Activated CD8-positive, alpha-beta T cell treated with anti-CD3 and anti-CD28 coated beads, Interleukin-2, amount 10 ng/mL, durations not matched to agents 7 days and 5 days (primary cell): ENCODE measurements at regions of chr3 and their contacts with region 1.

Region 1: GRCh38 chr3:3160826-3161225 is 18.7 kb downstream of the CRBN start:
- DNase-seq: no peak
- ATAC-seq: no peak
- H3K4me3 Mint-ChIP-seq: no peak overlapping the region
- H3K27ac Mint-ChIP-seq: no peak overlapping the region
- H3K4me1 Mint-ChIP-seq: no peaks in the 10 kb centered on the region
- H3K27me3 Mint-ChIP-seq: no peaks in the 10 kb centered on the region

Region 2: DNA sequence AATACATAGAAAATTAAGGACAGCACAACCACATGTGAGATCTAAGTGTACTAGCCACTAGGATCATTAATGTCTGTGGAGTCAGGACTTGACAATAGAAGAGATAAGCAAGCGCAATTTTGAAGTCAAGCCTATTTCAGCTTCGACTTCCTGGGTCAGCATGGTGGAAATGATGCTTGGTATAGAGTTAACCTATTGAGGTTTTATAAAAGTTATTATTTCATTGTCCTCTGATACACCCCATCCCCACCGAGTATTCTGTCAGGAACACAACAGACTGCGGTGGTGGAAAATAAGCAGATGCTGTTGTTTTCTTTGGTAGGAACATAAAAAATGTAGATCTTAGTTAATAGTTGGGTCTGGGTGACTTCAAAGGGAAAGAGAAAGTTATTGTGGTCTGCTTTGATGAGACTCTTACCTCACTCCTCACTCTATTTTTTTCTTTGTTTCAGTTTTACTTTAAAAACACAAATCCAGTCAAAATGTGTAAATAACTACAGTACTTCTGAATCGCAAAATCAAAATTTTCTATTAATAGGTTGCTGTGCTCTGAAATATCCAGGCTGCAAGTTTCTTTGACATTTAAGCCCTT is 132.8 kb before region 1 on chr3:
- CTCF ChIA-PET with region 1: no interaction called
- POLR2A ChIA-PET with region 1: no interaction called
- DNase-seq: no peak
- ATAC-seq: peak; percentile 73
- H3K4me3 Mint-ChIP-seq: peak overlapping the region; percentile 13
- H3K27ac Mint-ChIP-seq: peak overlapping the region; percentile 43
- H3K4me1 Mint-ChIP-seq: peaks cover 10% of the 10 kb centered on the region
- H3K27me3 Mint-ChIP-seq: peaks cover 6% of the 10 kb centered on the region

Region 3: DNA sequence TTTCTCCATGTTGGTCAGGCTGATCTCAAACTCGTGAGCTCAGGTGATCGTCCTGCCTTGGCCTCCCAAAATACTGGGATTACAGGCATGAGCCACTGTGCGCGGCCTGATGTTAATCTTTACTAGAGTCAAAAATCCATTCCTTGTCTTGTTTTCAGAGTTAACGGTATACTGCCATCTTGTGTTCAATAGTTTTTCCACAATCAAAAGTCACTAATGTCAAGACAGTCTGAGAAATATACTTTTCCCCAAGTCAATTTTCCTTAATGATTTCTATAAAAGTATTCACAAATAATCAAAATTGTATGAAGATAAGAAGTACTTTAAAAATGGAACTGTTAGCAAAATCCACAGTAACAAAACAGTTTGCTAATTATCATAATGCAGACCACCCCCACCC is 10.2 kb after region 1 on chr3:
- CTCF ChIA-PET with region 1: interaction called, 12 read pairs
- POLR2A ChIA-PET with region 1: interaction called, 3 read pairs
- DNase-seq: no peak
- ATAC-seq: no peak
- H3K4me3 Mint-ChIP-seq: no peak overlapping the region
- H3K27ac Mint-ChIP-seq: no peak overlapping the region
- H3K4me1 Mint-ChIP-seq: peaks cover 49% of the 10 kb centered on the region
- H3K27me3 Mint-ChIP-seq: no peaks in the 10 kb centered on the region